Breast epithelium (tissue), 4 donors: ENCODE measurements at regions of chr3 and their contacts with region 1.

Region 1: DNA sequence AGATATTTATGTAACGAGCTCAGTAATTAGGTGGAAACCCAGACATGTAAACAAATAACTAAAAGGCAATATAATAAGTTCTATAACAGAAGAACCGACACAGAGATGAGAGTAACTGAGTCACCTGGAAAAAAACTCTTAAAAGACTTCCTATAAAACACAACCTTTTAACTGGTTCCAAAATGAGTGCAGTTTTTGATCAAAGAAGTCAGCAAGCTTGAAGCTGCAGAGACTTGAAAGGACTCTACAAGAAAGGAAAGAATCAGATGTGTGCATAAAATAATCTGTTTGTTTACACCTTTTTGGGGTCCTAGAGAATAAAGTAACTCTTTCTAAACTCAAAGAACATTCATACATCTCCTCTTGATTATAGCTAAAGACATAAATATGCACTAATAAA is 560.4 kb upstream of the CCDC54 start:
- DNase-seq: no peak
- H3K4me3 ChIP-seq: no peak overlapping the region
- H3K27ac ChIP-seq: no peak overlapping the region
- H3K4me1 ChIP-seq: no peaks in the 10 kb centered on the region
- H3K27me3 ChIP-seq: no peaks in the 10 kb centered on the region
- CTCF ChIP-seq: no peak
- POLR2A ChIP-seq: no peak

Region 2: DNA sequence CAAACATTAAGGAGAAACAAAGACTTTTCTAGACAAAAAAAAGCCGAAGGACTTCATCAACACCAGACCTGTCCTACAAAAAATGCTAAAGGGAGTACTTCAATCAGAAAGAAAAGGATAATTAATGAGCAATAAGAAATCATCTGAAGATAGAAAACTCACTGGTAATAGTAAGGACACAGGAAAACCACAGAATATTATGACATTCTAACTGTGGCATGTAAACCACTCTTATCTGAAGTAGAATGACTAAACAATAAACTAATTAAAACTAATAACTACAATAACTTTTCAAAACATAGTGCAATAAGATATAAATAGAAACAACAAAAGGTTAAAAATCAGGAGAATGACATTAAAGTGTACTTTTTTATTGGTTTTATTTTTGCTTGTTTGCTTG is 24.1 kb before region 1 on chr3:
- intact Hi-C with region 1: loop called (anchors 1 kb)
- DNase-seq: no peak
- H3K4me3 ChIP-seq: no peak overlapping the region
- H3K27ac ChIP-seq: no peak overlapping the region
- H3K4me1 ChIP-seq: no peaks in the 10 kb centered on the region
- H3K27me3 ChIP-seq: no peaks in the 10 kb centered on the region
- CTCF ChIP-seq: no peak
- POLR2A ChIP-seq: no peak